ENCODE measurements at regions of chr20 and their contacts with region 1.

Region 1: GRCh38 chr20:57680131-57680716 is 29.6 kb downstream of the PMEPA1 start:
- DNase-seq: peak; percentile 64
- ATAC-seq: peak; percentile 72
- H3K4me3 Mint-ChIP-seq: peak overlapping the region; percentile 80
- H3K27ac Mint-ChIP-seq: peak overlapping the region; percentile 94
- H3K4me1 Mint-ChIP-seq: peaks cover 100% of the 10 kb centered on the region
- H3K27me3 Mint-ChIP-seq: no peaks in the 10 kb centered on the region
- CTCF ChIP-seq: no peak

Region 2: GRCh38 chr20:57480444-57481160 is 199.6 kb before region 1 on chr20:
- CTCF ChIA-PET with region 1: no interaction called
- POLR2A ChIA-PET with region 1: no interaction called
- intact Hi-C with region 1: loop called (anchors 2 kb)
- DNase-seq: peak; percentile 64
- ATAC-seq: peak; percentile 69
- H3K4me3 Mint-ChIP-seq: peak overlapping the region; percentile 73
- H3K27ac Mint-ChIP-seq: peak overlapping the region; percentile 81
- H3K4me1 Mint-ChIP-seq: peaks cover 82% of the 10 kb centered on the region
- H3K27me3 Mint-ChIP-seq: no peaks in the 10 kb centered on the region
- CTCF ChIP-seq: no peak

Region 3: GRCh38 chr20:57628047-57628961 is 51.9 kb before region 1 on chr20:
- CTCF ChIA-PET with region 1: interaction called, 14 read pairs
- POLR2A ChIA-PET with region 1: interaction called, 43 read pairs
- intact Hi-C with region 1: loop called (anchors 2 kb)
- DNase-seq: no peak
- ATAC-seq: peak; percentile 81
- H3K4me3 Mint-ChIP-seq: peak overlapping the region; percentile 81
- H3K27ac Mint-ChIP-seq: peak overlapping the region; percentile 98
- H3K4me1 Mint-ChIP-seq: peaks cover 39% of the 10 kb centered on the region
- H3K27me3 Mint-ChIP-seq: peaks cover 12% of the 10 kb centered on the region
- CTCF ChIP-seq: no peak

Region 4: DNA sequence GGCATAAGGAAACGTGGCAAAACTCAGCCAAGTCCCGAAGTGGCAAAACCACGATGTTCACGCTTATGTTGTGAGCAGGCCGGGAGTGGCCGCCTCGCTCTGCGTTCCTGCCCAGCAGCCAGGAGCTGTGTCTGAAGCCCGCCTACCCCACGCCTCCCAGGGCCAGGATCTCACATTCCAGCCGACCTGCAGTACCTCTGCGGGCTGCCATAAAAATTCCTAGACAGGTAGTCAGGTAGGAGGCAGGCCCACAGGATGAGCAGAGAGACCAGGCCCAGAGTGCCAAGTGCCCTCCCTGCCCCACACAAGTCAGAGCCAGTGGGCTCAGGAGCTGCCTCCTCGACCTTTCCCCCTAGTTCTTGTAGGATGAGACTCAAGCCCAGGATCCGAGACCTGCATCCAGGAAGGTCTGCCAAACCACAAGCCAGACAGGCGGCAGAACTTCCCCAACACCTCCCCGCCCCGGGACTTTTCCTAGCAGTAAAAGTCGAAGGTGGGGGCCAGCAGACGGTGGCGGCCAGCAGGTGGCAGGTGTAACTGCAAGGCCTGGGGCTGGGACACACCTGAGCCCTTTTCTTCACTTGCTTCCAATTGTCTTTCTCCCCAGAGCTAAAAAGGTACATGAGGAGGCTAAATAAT is 12.9 kb after region 1 on chr20:
- CTCF ChIA-PET with region 1: interaction called, 64 read pairs
- POLR2A ChIA-PET with region 1: interaction called, 189 read pairs
- intact Hi-C with region 1: no loop called
- DNase-seq: no peak
- ATAC-seq: no peak
- H3K4me3 Mint-ChIP-seq: no peak overlapping the region
- H3K27ac Mint-ChIP-seq: no peak overlapping the region
- H3K4me1 Mint-ChIP-seq: peaks cover 92% of the 10 kb centered on the region
- H3K27me3 Mint-ChIP-seq: no peaks in the 10 kb centered on the region
- CTCF ChIP-seq: no peak

Region 5: GRCh38 chr20:57709931-57710799 is 29.9 kb after region 1 on chr20 and contains the start of gene PMEPA1:
- CTCF ChIA-PET with region 1: interaction called, 48 read pairs
- POLR2A ChIA-PET with region 1: interaction called, 154 read pairs
- intact Hi-C with region 1: loop called (anchors 1 kb)
- DNase-seq: peak; percentile 95
- ATAC-seq: peak; percentile 86
- H3K4me3 Mint-ChIP-seq: peak within 1 kb of the TSS; percentile 99
- H3K27ac Mint-ChIP-seq: peak within 1 kb of the TSS; percentile 92
- H3K4me1 Mint-ChIP-seq: peaks cover 59% of the 10 kb centered on the region
- H3K27me3 Mint-ChIP-seq: no peaks in the 10 kb centered on the region
- CTCF ChIP-seq: no peak
- total RNA-seq, gene PMEPA1: 33.1 and 34.8 TPM in 2 replicates

Region 6: DNA sequence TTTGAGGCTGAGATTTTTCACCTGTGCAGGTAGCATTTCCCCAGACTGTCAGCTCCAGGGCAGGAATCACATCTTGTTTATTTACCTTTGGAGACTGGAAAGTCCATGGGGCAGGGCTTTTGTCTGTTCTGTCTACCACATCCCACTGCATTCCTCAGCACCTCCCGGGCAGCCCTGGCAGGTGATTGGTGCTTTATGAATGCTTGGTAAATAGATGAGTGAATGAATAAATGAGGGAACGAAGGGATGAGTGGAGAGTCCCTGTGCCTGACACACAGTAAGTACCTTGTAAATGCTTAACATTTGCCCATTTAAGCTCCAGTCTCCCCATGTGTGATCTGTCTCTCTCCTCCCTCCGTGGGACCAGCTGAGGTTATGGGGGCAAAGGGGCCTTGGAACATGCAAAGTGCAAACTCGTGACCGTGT is 99.2 kb after region 1 on chr20:
- CTCF ChIA-PET with region 1: no interaction called
- POLR2A ChIA-PET with region 1: no interaction called
- intact Hi-C with region 1: no loop called
- DNase-seq: no peak
- ATAC-seq: no peak
- H3K4me3 Mint-ChIP-seq: no peak overlapping the region
- H3K27ac Mint-ChIP-seq: no peak overlapping the region
- H3K4me1 Mint-ChIP-seq: no peaks in the 10 kb centered on the region
- H3K27me3 Mint-ChIP-seq: peaks cover 21% of the 10 kb centered on the region
- CTCF ChIP-seq: no peak

Region 7: GRCh38 chr20:58179432-58180099 is 499.3 kb after region 1 on chr20:
- CTCF ChIA-PET with region 1: interaction called, 3 read pairs
- POLR2A ChIA-PET with region 1: no interaction called
- intact Hi-C with region 1: loop called (anchors 1 kb)
- DNase-seq: peak; percentile 75
- ATAC-seq: peak; percentile 96
- H3K4me3 Mint-ChIP-seq: no peak overlapping the region
- H3K27ac Mint-ChIP-seq: no peak overlapping the region
- H3K4me1 Mint-ChIP-seq: peaks cover 9% of the 10 kb centered on the region
- H3K27me3 Mint-ChIP-seq: peaks cover 36% of the 10 kb centered on the region
- CTCF ChIP-seq: peak; percentile 94

Measured in activated B cell treated with CpG ODN at 0.5 μM for 24 hours (primary cell).